ENCODE measurements at regions of chr2 and their contacts with region 1.

Region 1: GRCh38 chr2:30115141-30115980 is 31.4 kb upstream of the YPEL5 start:
- DNase-seq: peak; percentile 84 to 89
- ATAC-seq: peak; percentile 78
- H3K4me3 ChIP-seq: no peak overlapping the region
- H3K27ac ChIP-seq: no peak overlapping the region
- H3K4me1 ChIP-seq: no peaks in the 10 kb centered on the region
- H3K27me3 ChIP-seq: no peaks in the 10 kb centered on the region

Region 2: GRCh38 chr2:29611850-29612249 is 503.5 kb before region 1 on chr2:
- intact Hi-C with region 1: no loop called
- DNase-seq: no peak
- ATAC-seq: no peak
- H3K4me3 ChIP-seq: no peak overlapping the region
- H3K27ac ChIP-seq: no peak overlapping the region
- H3K4me1 ChIP-seq: no peaks in the 10 kb centered on the region
- H3K27me3 ChIP-seq: no peaks in the 10 kb centered on the region

Region 3: DNA sequence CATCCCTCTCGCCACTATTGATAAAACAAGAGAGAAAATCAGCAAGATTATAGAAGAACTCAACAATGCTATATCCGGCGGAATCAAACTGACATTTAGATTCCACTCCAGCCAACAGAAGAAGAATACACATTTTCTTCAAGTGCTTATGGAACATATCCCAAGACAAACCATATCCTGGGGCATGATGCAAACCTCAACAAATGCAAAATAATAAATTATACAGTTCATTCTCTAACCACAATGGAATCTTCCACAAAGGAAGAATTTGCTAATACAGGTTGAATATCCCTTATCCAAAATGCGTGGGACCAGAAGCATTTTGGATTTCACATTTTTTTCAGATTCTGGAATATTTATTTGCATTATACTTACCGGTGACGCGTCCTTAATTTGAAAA is 20.0 kb before region 1 on chr2:
- intact Hi-C with region 1: loop called in 1 of 2 experiments (anchors 1 kb)
- DNase-seq: no peak
- ATAC-seq: no peak
- H3K4me3 ChIP-seq: no peak overlapping the region
- H3K27ac ChIP-seq: no peak overlapping the region
- H3K4me1 ChIP-seq: no peaks in the 10 kb centered on the region
- H3K27me3 ChIP-seq: no peaks in the 10 kb centered on the region

Measured in aorta (tissue), 5 donors.